Activated T-helper 2 cell treated with anti-CD3 and anti-CD28 coated beads, Interferon-gamma antibody, Interleukin-2, Interleukin-4, amounts not matched to agents 10 μg/mL and 5 μg/mL and 100 μg/mL, durations not matched to agents 14 hours and 24 hours and 36 hours (primary cell): ENCODE measurements at regions of chr2 and their contacts with region 1.

Region 1: DNA sequence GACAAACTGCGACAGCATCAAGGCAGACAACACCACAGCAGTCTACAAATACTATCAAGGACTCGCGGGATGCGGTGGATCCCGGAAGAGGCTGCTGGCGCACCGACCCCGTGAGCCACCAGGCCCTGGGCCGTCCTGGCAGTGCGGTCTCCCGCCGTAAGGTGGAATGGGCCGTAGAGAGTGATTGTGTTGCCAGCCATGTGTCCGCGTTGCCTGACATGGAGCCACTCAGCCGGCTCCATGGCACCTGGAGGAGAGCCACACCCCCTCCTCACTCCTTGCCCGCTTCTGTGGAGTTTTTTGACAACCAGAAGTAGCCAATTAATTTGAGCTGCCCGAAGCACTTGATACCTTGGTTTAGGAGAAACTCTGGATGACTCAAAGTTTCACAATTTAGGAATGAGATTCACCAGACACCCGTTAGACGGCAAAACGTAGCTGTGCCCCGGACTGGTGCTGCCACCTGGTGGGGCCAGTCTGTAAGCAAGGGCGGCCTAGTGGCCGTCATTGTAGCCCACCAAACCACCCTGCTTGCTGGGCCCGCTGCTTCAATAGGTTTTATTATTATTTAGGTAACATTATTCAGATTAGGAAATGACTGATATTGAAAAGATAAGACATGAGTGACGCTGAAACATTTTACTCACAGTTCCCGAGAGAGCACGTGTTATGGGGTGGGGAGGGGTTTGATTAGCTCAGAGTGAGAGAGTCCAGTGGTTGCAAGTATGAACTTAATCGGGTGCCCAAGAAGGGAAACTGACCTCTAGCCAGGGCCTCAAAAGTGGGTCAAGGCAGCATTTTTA is 10.2 kb upstream of the IMP4 start:
- DNase-seq: peak; percentile 45
- H3K4me3 Mint-ChIP-seq: no peak overlapping the region
- H3K27ac Mint-ChIP-seq: no peak overlapping the region
- H3K4me1 Mint-ChIP-seq: peaks cover 5% of the 10 kb centered on the region
- H3K27me3 Mint-ChIP-seq: peaks cover 36% of the 10 kb centered on the region

Region 2: DNA sequence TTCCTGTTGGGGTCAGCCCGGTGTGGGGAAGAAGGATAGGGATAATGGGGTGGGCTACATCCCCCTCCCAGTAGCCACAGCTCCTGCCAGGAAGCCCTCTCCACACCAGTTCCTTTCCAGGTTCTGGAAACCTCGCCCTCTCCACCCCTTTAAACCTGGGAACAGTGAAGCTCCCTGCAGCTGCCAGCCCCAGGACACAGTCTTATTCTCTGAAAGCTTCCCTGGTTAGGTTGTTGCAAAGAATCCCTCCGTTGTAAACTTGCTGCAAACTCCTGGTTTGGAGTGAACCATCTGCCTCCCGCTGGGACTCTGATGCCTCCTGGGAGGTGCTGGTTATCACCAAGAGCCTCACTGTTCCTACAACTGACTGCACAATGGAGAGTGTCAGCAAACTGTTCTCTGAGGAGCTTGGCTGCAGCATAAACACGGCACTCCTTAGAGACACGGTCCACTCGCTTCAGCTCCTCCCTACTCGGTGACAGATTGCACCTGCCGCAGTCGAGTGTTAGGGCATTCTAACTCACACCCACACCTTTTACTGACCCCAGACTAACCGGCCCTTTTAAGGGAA is 614.8 kb before region 1 on chr2:
- intact Hi-C with region 1: no loop called
- DNase-seq: no peak
- H3K4me3 Mint-ChIP-seq: no peak overlapping the region
- H3K27ac Mint-ChIP-seq: no peak overlapping the region
- H3K4me1 Mint-ChIP-seq: no peaks in the 10 kb centered on the region
- H3K27me3 Mint-ChIP-seq: no peaks in the 10 kb centered on the region

Region 3: DNA sequence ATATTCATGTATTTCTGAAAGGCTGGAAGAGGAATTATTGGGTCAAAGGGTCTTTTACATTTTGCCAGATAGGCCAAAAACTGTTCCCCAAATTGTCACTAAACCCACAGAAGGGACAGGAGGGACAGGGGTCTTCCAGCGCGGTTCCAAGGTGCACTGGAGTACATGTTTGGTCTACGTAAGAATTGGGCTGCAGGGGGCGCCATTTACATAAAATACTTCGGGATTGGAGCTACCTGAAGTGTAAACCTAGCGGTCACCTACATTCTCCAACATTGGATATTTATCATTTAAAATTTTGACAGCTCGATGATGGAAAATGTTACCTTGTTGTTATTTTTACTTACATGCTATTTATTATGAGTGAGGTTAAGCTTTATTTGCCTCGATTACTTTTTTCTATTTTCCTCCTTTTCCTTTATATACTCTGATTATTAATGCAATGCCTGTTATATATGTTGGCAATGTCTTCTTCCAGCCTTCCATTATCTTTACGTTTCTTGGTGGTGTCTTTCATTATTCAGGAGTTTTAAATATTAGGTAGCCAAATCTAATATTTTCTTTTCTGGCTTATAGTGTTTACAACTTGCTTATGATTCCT is 396.0 kb before region 1 on chr2:
- intact Hi-C with region 1: loop called (anchors 1 kb)
- DNase-seq: peak; percentile 46
- H3K4me3 Mint-ChIP-seq: no peak overlapping the region
- H3K27ac Mint-ChIP-seq: no peak overlapping the region
- H3K4me1 Mint-ChIP-seq: no peaks in the 10 kb centered on the region
- H3K27me3 Mint-ChIP-seq: peaks cover 30% of the 10 kb centered on the region

Region 4: GRCh38 chr2:130150181-130151144 is 182.0 kb before region 1 on chr2:
- intact Hi-C with region 1: loop called (anchors 10 kb)
- DNase-seq: no peak
- H3K4me3 Mint-ChIP-seq: no peak overlapping the region
- H3K27ac Mint-ChIP-seq: no peak overlapping the region
- H3K4me1 Mint-ChIP-seq: no peaks in the 10 kb centered on the region
- H3K27me3 Mint-ChIP-seq: peaks cover 3% of the 10 kb centered on the region

Region 5: DNA sequence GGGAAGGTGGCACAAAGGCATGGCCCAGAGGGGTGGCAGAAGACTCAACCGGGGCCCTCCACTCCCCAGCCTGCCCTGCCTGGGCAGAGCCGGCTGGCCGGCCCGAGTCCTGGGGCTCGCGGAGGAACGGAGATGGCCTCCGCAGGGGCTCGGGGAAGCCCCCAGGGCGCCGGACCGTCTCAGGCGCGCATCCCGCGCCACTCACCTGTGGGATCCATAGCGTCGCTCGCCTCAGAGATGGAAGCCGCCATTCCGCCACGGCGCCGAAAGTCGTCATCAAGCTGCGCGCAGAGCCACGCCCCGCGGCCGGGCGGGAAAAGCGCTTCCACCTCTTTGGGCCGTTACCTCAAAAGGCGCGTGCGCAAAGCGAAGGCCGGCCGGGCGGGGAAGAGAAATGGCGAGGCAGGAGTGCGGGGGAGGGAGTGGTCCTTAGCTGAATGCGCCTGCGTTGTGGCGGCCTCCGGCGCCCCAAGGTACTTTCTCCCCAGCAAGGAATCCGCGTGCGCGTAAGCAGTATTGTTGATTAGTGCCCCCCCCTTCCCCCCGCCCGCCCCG is 151.1 kb before region 1 on chr2 and contains the start of gene SMPD4:
- intact Hi-C with region 1: loop called (anchors 1 kb)
- DNase-seq: peak; percentile 95
- H3K4me3 Mint-ChIP-seq: peak within 1 kb of the TSS; percentile 92
- H3K27ac Mint-ChIP-seq: peak within 1 kb of the TSS; percentile 95
- H3K4me1 Mint-ChIP-seq: peaks cover 9% of the 10 kb centered on the region
- H3K27me3 Mint-ChIP-seq: no peaks in the 10 kb centered on the region
- total RNA-seq, gene SMPD4: 84.3 and 84.8 TPM in 2 replicates